Transverse colon (tissue), 4 donors: ENCODE measurements at regions of chr11 and their contacts with region 1.

Region 1: GRCh38 chr11:104275992-104276391 is 112.0 kb upstream of the PDGFD start:
- DNase-seq: no peak
- H3K4me3 ChIP-seq: no peak overlapping the region
- H3K27ac ChIP-seq: no peak overlapping the region
- H3K4me1 ChIP-seq: no peaks in the 10 kb centered on the region
- H3K27me3 ChIP-seq: no peaks in the 10 kb centered on the region
- CTCF ChIP-seq: no peak
- EP300 ChIP-seq: no peak
- POLR2A ChIP-seq: no peak

Region 2: GRCh38 chr11:105392556-105392955 is 1116.6 kb after region 1 on chr11:
- in situ Hi-C with region 1: no loop called
- intact Hi-C with region 1: loop called (anchors 5 kb)
- DNase-seq: no peak
- H3K4me3 ChIP-seq: no peak overlapping the region
- H3K27ac ChIP-seq: no peak overlapping the region
- H3K4me1 ChIP-seq: no peaks in the 10 kb centered on the region
- H3K27me3 ChIP-seq: no peaks in the 10 kb centered on the region
- CTCF ChIP-seq: no peak
- EP300 ChIP-seq: no peak
- POLR2A ChIP-seq: no peak